ENCODE measurements at regions of chr5 and their contacts with region 1.

Region 1: GRCh38 chr5:119389288-119390030 is 33.6 kb downstream of the TNFAIP8 start:
- DNase-seq: no peak
- ATAC-seq: peak; percentile 42
- H3K4me3 ChIP-seq: peak overlapping the region; percentile 48; the same call in 1 of the 2 replicates
- H3K27ac ChIP-seq: peak overlapping the region; percentile 29
- H3K4me1 ChIP-seq: peaks cover 61% of the 10 kb centered on the region
- H3K27me3 ChIP-seq: no peaks in the 10 kb centered on the region
- CTCF ChIP-seq: no peak
- EP300 ChIP-seq: no peak
- POLR2A ChIP-seq: no peak
- RAD21 ChIP-seq: no peak

Region 2: DNA sequence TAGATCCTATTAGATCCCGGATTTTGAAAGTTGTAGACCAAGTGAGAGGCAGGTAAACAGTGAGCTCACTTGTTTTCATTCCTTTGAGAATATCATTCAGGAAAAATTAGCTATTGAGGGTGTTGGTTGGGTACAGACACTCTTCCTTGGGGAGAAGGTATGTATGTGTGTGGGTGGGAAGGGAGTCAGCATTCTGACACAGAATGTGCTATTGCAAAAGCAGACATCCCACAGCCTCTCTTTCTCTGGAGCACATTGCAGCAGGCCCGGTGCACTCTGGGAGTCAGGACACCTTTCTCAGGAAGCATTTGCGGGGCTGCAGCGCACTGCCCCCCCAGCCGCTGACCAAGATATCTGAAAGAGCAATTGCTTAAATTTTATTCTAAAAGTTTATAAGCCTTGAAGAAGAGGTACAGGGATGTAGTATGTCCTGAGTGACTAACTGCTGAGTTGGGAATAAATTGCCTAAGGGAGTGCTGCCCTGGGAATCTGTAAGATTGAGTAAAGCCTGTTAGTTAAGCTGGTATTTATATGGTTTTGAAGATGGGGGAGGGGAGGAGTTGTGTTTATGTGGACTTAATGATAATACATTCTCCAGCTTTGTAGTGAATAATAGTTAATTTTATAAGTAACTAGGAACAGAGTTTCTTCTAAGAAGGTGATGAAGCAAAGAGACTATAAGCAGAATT is 28.4 kb before region 1 on chr5:
- CTCF ChIA-PET with region 1: interaction called, 5 read pairs
- POLR2A ChIA-PET with region 1: interaction called, 10 read pairs
- RAD21 ChIA-PET with region 1: interaction called, 11 read pairs
- SMC1A ChIA-PET with region 1: interaction called, 21 read pairs
- in situ Hi-C with region 1: no loop called
- intact Hi-C with region 1: no loop called
- DNase-seq: no peak
- ATAC-seq: no peak
- H3K4me3 ChIP-seq: peak overlapping the region; percentile 96
- H3K27ac ChIP-seq: peak overlapping the region; percentile 3; the same call in 1 of the 2 replicates
- H3K4me1 ChIP-seq: peaks cover 50% of the 10 kb centered on the region
- H3K27me3 ChIP-seq: no peaks in the 10 kb centered on the region
- CTCF ChIP-seq: no peak
- EP300 ChIP-seq: no peak
- POLR2A ChIP-seq: no peak
- RAD21 ChIP-seq: no peak

Region 3: GRCh38 chr5:119367502-119368237 is 21.8 kb before region 1 on chr5:
- CTCF ChIA-PET with region 1: interaction called, 14 read pairs
- POLR2A ChIA-PET with region 1: interaction called, 9 read pairs
- RAD21 ChIA-PET with region 1: interaction called, 11 read pairs
- SMC1A ChIA-PET with region 1: interaction called, 41 read pairs
- in situ Hi-C with region 1: no loop called
- intact Hi-C with region 1: no loop called
- DNase-seq: peak; percentile 81
- ATAC-seq: peak; percentile 72
- H3K4me3 ChIP-seq: peak overlapping the region; percentile 59
- H3K27ac ChIP-seq: peak overlapping the region; percentile 95
- H3K4me1 ChIP-seq: peaks cover 44% of the 10 kb centered on the region
- H3K27me3 ChIP-seq: no peaks in the 10 kb centered on the region
- CTCF ChIP-seq: no peak
- EP300 ChIP-seq: peak; percentile 92 to 95
- POLR2A ChIP-seq: no peak
- RAD21 ChIP-seq: 0 out of 2 replicates have a peak, but pooled peaks have one; percentile 8

Region 4: DNA sequence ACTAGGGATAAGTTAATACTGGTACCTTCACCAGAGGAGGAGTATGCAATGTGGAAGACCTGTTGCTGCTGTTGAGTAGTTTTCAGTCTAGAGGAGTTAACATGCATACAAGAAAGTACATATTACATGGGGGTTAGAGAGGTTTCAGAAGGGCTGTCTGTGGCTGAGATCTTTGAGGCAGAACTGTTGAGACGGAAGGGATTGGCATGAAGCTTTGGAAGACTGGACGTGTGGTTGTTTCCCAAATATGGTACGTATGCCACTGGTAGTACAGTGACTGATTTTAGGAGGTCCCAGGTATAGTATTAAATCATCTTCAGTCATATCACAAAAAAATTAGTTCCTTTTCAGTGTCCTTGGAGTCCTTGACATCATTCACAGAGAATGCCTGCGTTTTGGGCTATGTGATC is 16.0 kb before region 1 on chr5:
- CTCF ChIA-PET with region 1: interaction called, 14 read pairs
- POLR2A ChIA-PET with region 1: interaction called, 17 read pairs
- RAD21 ChIA-PET with region 1: interaction called, 8 read pairs
- SMC1A ChIA-PET with region 1: interaction called, 41 read pairs
- in situ Hi-C with region 1: no loop called
- intact Hi-C with region 1: no loop called
- DNase-seq: peak; percentile 65
- ATAC-seq: peak; percentile 80
- H3K4me3 ChIP-seq: no peak overlapping the region
- H3K27ac ChIP-seq: peak overlapping the region; percentile 40; the same call in 1 of the 2 replicates
- H3K4me1 ChIP-seq: peaks cover 16% of the 10 kb centered on the region
- H3K27me3 ChIP-seq: no peaks in the 10 kb centered on the region
- CTCF ChIP-seq: no peak
- EP300 ChIP-seq: no peak
- POLR2A ChIP-seq: no peak
- RAD21 ChIP-seq: no peak

Measured in GM12878 (cell line).